ENCODE measurements at regions of chr2 and their contacts with region 1.

Region 1: GRCh38 chr2:169798718-169799592 is at the start of gene SSB:
- DNase-seq: peak; percentile 89
- H3K4me3 Mint-ChIP-seq: peak within 1 kb of the TSS; percentile 93
- H3K27ac Mint-ChIP-seq: peak within 1 kb of the TSS; percentile 89
- H3K4me1 Mint-ChIP-seq: peaks cover 32% of the 10 kb centered on the region
- H3K27me3 Mint-ChIP-seq: peaks cover 10% of the 10 kb centered on the region
- total RNA-seq, gene SSB: 101 and 107 TPM in 2 replicates

Region 2: DNA sequence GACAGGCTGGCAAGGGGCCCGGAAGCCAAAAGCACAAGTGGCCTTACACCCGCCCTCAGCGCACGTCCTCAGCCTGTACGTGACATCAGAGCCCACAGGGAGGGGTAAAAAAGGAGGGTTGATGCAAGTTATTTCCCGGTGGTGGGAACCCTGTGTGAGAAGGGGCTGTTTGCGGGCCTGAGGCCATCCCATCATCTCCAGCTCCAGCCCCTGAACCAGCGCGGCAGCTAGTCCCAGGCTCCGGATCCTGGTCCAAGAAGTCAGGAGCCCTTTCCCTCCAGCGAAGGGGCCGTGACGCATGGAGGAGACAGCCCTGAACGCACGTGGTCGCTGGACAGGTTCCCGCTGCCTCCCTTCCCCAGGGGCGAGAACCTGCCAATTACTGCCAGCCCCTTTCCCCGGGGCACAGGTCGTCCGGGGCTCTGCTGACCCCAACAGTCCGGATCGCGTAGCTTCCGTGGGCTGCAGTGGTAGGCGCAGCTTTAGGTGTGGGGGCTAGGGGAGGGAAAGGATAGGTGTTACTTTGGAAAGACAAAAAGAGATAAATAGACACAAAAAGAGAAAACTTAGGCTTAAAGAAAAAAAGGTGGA is 435.3 kb before region 1 on chr2:
- intact Hi-C with region 1: loop called (anchors 10 kb)
- DNase-seq: peak; percentile 41
- H3K4me3 Mint-ChIP-seq: peak overlapping the region; percentile 88
- H3K27ac Mint-ChIP-seq: peak overlapping the region; percentile 75
- H3K4me1 Mint-ChIP-seq: peaks cover 31% of the 10 kb centered on the region
- H3K27me3 Mint-ChIP-seq: peaks cover 46% of the 10 kb centered on the region

Region 3: DNA sequence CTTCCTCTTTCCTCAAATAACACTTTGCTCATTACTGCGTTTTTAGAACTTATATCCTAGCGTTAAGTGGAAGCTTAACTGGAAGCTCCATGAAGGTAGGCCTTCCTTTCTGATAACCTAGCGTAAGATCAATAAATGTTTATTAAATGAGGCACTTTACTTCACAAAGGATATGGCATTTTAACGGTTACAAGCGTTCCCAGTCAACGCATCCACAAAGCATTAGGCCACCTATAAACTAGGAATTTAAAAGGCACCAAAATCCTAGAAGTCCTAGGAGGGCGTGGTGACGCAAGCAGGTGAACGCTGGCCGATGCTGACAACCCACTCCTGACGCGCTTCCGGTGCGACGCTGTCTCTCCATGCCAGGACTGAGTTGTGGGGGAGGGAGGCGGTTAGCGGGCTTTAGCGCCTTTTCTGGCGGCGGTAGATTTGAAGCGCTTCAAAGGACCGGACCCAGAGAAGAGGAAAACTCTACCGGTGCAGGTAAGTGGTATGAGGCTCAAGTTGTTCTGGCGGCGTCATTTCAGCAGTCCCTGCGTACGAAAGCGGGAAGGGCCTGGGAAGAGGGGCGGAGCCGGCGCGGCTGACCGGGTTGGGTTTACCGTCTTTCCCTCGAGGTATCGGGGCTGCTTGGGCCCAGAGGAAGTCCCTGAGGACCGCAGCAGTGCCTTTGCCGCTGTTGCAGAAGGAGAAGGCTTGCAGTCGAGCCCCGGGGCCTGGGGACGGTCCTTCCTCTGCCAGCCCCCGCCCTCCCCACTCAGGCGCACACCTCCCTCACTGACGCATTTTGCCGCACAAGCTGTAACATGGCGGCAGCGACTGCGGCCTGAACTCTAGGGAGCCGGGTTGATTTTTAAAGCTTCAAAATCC is 214.7 kb before region 1 on chr2 and contains the start of gene PPIG:
- intact Hi-C with region 1: loop called (anchors 1 kb)
- DNase-seq: peak; percentile 78
- H3K4me3 Mint-ChIP-seq: peak within 1 kb of the TSS; percentile 100
- H3K27ac Mint-ChIP-seq: peak within 1 kb of the TSS; percentile 100
- H3K4me1 Mint-ChIP-seq: peaks cover 21% of the 10 kb centered on the region
- H3K27me3 Mint-ChIP-seq: peaks cover 2% of the 10 kb centered on the region
- total RNA-seq, gene PPIG: 54.2 and 56.3 TPM in 2 replicates

Region 4: DNA sequence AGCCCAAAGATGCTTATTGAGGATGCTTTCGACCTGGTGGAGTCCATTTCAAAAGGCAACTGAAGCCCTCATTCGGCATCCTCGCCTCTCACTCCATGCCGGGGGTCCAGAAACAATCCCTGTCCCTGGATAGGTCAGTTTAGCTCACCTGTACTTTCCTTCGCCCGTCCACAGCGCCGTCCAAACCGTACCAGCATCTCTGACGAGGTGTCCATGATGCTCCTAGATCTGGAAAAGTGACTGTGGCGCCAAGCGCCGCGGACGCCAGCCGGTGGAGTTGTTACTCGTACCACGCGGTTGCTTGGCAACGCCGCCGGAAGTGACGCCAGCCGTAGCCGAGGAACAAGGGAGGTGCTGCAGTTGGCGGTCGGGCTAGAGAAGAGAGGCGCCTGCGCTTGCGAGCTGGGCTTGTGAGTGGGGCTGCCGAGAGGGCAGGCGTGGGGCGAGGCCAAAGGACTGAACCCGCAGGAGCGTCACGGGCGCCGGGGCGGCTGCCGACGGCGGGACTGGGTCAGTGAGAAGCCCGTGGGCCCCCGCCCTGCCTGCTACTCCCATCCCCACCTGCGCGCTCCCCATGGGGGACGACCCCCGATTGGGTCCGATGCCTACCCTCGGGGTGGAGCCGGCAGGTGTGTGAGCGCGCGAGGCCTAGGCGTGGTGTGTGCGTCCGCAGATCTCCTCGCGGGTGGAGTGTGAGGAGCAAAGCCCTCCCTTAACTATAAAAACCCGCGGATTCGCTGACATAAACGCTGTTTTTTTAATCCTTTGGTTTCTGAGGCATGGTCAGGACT is 104.6 kb before region 1 on chr2 and contains the starts of genes CFAP210 and PHOSPHO2:
- intact Hi-C with region 1: loop called (anchors 1 kb)
- DNase-seq: peak; percentile 98
- H3K4me3 Mint-ChIP-seq: peak within 1 kb of the TSS; percentile 88
- H3K27ac Mint-ChIP-seq: peak within 1 kb of the TSS; percentile 88
- H3K4me1 Mint-ChIP-seq: peaks cover 9% of the 10 kb centered on the region
- H3K27me3 Mint-ChIP-seq: peaks cover 17% of the 10 kb centered on the region
- total RNA-seq, gene CFAP210: not detected in 2 replicates
- total RNA-seq, gene PHOSPHO2: 4.5 and 4.6 TPM in 2 replicates

Region 5: DNA sequence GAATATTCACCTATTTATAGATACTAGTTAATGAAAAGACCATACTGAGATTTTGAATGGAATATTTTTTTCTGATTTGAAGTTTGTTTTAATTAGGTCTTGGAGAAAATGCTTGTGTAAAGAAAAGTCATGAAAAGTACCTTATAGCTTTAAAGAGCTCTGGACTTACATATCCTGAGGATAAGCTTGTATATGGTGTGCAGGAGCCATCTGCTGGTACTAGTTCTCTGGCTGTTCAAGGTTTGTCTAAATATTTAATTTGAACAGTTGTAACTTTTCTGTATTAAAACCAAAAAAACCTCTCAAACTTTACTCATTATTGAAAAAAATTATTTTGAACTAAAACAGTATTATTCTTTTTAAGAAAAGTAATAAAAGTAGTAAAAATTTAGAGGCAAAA is 78.4 kb after region 1 on chr2:
- intact Hi-C with region 1: no loop called
- DNase-seq: no peak
- H3K4me3 Mint-ChIP-seq: no peak overlapping the region
- H3K27ac Mint-ChIP-seq: no peak overlapping the region
- H3K4me1 Mint-ChIP-seq: no peaks in the 10 kb centered on the region
- H3K27me3 Mint-ChIP-seq: no peaks in the 10 kb centered on the region

Region 6: GRCh38 chr2:169928463-169928864 is 129.5 kb after region 1 on chr2:
- intact Hi-C with region 1: loop called (anchors 1 kb)
- DNase-seq: no peak
- H3K4me3 Mint-ChIP-seq: no peak overlapping the region
- H3K27ac Mint-ChIP-seq: no peak overlapping the region
- H3K4me1 Mint-ChIP-seq: no peaks in the 10 kb centered on the region
- H3K27me3 Mint-ChIP-seq: no peaks in the 10 kb centered on the region

Measured in activated T-helper 1 cell treated with anti-CD3 and anti-CD28 coated beads, Interleukin-12 subunit alpha, Interleukin-12 subunit beta, Interleukin-2, Interleukin-4 antibody, amounts not matched to agents 30 ng/mL and 10 ng/mL and 1 ng/mL, durations not matched to agents 14 hours and 24 hours and 36 hours (primary cell).